ENCODE measurements at regions of chr11 and their contacts with region 1.

Region 1: DNA sequence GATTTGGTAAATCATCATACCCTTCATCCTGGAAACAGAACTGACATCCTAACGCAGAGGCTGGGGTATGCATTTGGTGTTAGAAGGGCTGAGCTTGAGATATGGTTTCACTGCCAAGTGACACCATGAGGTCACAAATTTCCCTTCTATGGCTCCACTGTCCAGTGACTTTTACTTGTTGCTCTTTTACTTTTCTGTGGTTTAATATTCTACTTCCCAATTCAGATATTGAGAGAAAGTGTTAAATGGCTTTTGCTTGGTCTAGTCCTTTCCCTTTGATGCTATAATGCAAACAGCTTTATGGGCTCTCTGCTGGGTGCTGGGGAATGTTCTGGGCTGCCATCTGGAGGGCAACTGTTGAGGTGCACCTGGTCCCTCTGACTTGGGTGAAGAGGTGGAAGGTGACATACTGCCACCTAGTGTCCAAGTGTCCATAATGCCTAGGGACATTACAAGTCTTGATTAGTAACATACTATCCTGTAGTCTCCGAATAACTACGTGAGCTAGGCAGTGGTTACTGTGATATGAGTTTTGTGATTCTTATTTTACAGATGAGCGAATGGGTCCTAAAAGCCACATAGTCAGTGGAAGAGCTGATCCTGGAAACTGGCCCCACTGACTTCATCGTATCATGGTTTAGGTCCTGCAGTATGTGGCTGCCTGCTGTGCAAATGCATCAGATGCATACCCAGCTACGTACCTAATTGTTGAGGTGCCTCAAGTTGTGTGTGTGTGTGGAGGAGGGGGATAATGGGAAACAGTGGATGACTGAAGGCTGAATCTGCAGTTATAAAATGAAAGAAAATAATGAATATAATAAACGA is 149.1 kb upstream of the RAG2 start:
- DNase-seq: peak; percentile 92
- H3K4me3 Mint-ChIP-seq: no peak overlapping the region
- H3K27ac Mint-ChIP-seq: no peak overlapping the region
- H3K4me1 Mint-ChIP-seq: peaks cover 10% of the 10 kb centered on the region
- H3K27me3 Mint-ChIP-seq: peaks cover 38% of the 10 kb centered on the region
- CTCF ChIP-seq: peak; percentile 90

Region 2: DNA sequence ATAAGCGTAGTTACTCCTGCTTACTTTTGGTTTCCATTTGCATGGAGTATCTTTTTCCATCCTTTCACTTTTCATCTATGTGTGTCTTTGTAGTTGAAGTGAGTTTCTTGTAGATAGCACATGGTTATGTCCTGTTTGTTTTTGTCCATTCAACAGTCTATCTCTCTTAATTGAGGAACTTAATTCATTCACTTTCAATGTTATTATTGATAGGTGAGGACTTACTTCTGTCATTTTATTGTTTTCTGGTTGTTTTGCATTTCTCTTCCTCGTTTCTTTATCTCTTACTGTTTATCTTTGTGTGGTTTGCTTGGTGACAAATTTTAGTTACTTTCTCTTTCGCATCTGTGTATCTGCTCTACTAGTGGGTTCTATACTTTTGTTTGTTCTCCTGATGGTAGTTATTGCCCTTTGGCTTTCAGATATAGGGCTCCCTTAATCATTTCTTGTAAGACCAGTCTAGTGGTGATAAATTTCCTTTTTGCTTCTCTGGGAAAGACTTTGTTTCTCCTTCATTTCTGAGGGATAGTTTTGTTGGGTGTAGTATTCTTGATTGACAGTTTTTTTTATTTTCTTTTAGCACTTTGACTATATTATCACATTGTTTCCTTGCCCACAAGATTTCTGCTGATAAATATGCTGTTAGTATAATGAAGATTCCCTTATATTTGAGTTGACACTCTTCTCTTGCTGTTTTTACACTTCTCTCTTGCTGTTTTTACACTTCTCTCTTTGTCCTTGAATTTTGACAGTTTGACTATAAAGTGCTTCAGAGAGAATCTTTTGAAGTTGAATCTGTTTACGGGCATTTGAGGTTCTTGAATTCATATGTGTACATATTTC is 188.3 kb before region 1 on chr11:
- CTCF ChIA-PET with region 1: interaction called, 173 read pairs
- POLR2A ChIA-PET with region 1: no interaction called
- intact Hi-C with region 1: no loop called
- DNase-seq: no peak
- H3K4me3 Mint-ChIP-seq: no peak overlapping the region
- H3K27ac Mint-ChIP-seq: no peak overlapping the region
- H3K4me1 Mint-ChIP-seq: no peaks in the 10 kb centered on the region
- H3K27me3 Mint-ChIP-seq: peaks cover 16% of the 10 kb centered on the region
- CTCF ChIP-seq: no peak

Region 3: DNA sequence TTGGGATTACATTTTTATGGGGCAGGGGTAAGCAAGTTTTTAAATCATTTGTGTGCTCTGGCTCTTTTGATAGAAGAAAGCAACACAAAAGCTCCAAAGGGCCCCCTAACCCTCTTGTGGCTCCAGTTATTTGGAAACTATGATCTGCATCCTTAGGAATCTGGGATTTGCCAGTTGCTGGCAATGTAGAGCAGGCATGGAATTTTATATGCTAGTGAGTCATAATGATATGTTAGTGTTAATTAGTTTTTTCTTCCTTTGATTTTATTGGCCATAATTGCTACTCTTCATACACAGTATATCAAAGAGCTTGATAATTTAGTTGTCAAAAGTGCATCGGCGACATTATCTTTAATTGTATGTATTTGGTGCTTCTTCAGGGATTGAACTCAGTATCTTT is 169.2 kb before region 1 on chr11:
- CTCF ChIA-PET with region 1: interaction called, 13 read pairs
- POLR2A ChIA-PET with region 1: no interaction called
- intact Hi-C with region 1: no loop called
- DNase-seq: no peak
- H3K4me3 Mint-ChIP-seq: no peak overlapping the region
- H3K27ac Mint-ChIP-seq: no peak overlapping the region
- H3K4me1 Mint-ChIP-seq: no peaks in the 10 kb centered on the region
- H3K27me3 Mint-ChIP-seq: peaks cover 12% of the 10 kb centered on the region
- CTCF ChIP-seq: no peak

Region 4: DNA sequence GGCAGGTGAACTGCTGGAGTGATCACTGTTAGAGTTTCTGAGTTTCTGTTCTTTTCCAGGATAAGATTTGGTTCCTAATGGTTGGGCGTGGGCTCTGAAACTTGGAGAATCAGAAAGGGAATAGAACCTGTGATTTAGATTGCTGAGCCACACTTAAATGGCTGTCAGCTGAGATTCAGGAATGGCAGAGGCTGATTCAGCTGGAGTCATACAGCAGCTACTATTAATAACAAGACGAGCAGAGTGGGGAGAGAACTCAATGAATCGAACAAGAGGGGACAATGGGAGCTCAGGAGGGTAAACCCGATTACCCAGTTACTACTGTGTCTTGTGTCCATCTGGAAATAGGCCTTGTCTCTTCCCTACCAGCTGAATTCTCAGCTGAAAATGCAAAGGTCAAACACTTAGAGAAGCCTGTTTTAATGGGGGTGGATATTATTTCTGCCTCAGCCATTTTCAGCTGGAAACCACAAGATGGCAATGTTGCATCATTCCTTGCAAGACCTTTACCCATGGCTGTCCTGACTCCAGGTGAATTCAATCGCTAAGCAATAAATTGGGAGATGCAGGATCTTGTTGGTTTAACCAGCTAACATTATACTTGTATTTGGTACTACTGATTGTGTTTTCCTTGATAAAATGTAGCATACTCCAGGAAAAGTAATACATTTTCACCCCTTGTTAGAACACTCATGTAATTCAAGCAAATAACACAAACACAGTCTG is 44.6 kb before region 1 on chr11:
- CTCF ChIA-PET with region 1: interaction called, 204 read pairs
- POLR2A ChIA-PET with region 1: interaction called, 6 read pairs
- intact Hi-C with region 1: loop called (anchors 1 kb)
- DNase-seq: peak; percentile 78
- H3K4me3 Mint-ChIP-seq: no peak overlapping the region
- H3K27ac Mint-ChIP-seq: no peak overlapping the region
- H3K4me1 Mint-ChIP-seq: peaks cover 11% of the 10 kb centered on the region
- H3K27me3 Mint-ChIP-seq: peaks cover 3% of the 10 kb centered on the region
- CTCF ChIP-seq: peak; percentile 91

Region 5: GRCh38 chr11:36719358-36720107 is 27.6 kb before region 1 on chr11:
- CTCF ChIA-PET with region 1: interaction called, 25 read pairs
- POLR2A ChIA-PET with region 1: no interaction called
- intact Hi-C with region 1: no loop called
- DNase-seq: no peak
- H3K4me3 Mint-ChIP-seq: no peak overlapping the region
- H3K27ac Mint-ChIP-seq: no peak overlapping the region
- H3K4me1 Mint-ChIP-seq: no peaks in the 10 kb centered on the region
- H3K27me3 Mint-ChIP-seq: peaks cover 24% of the 10 kb centered on the region
- CTCF ChIP-seq: no peak

Region 6: DNA sequence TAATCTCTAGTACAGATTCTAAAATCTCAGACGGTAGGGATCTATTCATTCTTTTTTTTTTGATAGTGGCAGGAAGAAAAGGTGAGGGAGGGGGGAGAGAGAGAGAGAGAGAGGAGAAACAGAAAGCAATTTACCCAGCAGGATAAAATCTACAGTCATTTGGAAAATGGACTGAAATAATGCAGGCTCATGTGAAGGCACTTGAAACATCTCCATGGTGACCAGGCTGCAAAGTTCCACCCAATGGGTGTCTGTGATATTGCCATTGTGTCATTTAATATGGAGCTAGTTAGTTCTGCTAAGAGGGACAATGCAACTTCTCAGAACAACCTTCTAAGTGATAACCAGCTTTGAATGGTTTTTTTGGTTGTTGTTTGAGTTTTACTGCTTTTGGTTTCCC is 16.1 kb after region 1 on chr11:
- CTCF ChIA-PET with region 1: interaction called, 56 read pairs
- POLR2A ChIA-PET with region 1: no interaction called
- intact Hi-C with region 1: no loop called
- DNase-seq: no peak
- H3K4me3 Mint-ChIP-seq: no peak overlapping the region
- H3K27ac Mint-ChIP-seq: no peak overlapping the region
- H3K4me1 Mint-ChIP-seq: no peaks in the 10 kb centered on the region
- H3K27me3 Mint-ChIP-seq: no peaks in the 10 kb centered on the region
- CTCF ChIP-seq: no peak

Region 7: DNA sequence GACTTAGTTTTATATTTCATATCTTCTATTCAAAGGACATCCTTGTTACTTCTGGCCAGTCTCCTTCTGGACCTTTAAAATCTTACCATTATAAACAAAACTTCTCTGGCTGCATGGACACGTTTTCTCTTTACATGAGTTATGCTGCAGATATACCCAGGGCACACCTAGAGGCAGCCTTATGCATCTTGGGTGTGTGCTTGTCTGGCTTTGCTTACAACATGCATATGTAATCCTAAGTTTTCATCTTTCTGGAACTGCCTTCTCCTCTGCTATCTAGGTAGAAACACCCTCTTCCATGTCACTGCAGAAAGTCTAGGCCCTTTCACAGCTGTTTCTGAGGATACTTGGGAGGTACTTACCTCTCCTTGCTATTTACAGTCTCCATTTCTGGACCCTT is 36.7 kb after region 1 on chr11:
- CTCF ChIA-PET with region 1: interaction called, 20 read pairs
- POLR2A ChIA-PET with region 1: no interaction called
- intact Hi-C with region 1: no loop called
- DNase-seq: no peak
- H3K4me3 Mint-ChIP-seq: no peak overlapping the region
- H3K27ac Mint-ChIP-seq: no peak overlapping the region
- H3K4me1 Mint-ChIP-seq: no peaks in the 10 kb centered on the region
- H3K27me3 Mint-ChIP-seq: no peaks in the 10 kb centered on the region
- CTCF ChIP-seq: no peak